ENCODE measurements at regions of chr16 and their contacts with region 1.

Region 1: DNA sequence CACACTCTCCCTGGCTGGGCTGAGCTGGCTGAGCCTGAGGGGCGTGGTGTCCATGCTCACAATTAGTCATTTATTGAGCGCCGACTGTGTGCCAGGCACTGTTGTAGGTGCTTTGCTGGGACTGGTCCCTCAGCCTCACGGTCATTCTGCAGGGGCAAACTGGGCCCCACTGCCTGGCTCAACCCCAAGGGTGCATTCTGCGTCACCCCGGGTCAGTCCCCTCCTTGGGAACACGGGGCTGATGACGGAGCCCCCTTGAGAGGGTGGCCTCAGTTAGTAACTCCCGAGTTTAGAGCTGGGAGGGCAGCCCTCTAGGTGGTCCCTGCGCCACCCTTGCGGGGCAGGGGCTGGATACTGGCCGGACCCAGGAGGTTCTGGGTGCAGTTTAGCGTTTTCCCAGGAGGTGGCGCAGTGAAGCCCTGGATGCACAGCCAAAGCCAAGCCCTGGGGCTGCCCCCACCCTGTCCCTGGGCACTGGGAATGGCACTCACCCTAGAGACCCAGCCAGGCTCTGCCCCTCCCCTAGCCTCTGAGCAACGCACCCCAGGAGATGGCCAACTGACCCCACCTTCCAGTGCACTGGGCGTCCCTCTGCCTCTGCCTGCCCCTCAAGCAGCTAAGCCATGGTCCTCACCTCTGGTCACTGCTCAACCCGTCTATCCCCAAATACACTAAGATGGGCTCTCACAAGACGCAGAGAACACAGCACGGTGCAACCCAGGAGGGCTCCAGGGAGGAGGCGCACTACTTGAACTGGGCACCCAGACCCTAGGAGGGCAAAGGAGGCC is 243.2 kb upstream of the GSE1 start:
- DNase-seq: peak in 1 of 3 donors; percentile 45
- H3K4me3 ChIP-seq: no peak overlapping the region
- H3K27ac ChIP-seq: no peak overlapping the region
- H3K4me1 ChIP-seq: peaks cover 0 to 55% (median 44%) of the 10 kb centered on the region in 4 experiments
- H3K27me3 ChIP-seq: no peaks in the 10 kb centered on the region

Region 2: DNA sequence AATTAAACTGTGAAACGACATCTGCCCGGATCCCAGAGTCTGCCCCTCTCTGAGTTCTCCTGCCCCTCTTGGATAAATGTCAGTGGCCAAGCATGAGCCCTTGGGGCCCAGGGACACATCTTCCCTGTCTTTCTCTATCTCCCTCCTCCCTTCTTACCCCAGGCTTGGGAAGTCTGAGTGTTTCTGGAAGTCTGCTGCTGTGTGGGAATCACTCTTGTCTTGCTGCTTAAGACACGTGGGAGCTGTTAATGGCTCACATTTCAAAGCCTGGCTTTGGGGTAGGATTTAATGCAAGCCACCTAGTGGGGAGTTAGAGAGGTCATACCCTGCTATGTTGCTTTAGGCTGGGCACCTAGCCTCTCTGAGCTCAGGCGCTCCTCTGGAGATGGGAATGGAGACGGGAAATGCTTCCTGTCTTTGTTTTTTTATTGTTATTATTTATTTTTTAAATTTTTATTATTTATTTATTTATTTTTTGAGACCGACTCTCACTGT is 39.2 kb before region 1 on chr16:
- CTCF ChIA-PET with region 1: interaction called, 11 read pairs
- POLR2A ChIA-PET with region 1: no interaction called
- DNase-seq: peak in 2 of 3 donors; percentile 76 to 78
- H3K4me3 ChIP-seq: no peak overlapping the region
- H3K27ac ChIP-seq: no peak overlapping the region
- H3K4me1 ChIP-seq: peaks cover 0 to 64% (median 59%) of the 10 kb centered on the region in 4 experiments
- H3K27me3 ChIP-seq: no peaks in the 10 kb centered on the region

Region 3: DNA sequence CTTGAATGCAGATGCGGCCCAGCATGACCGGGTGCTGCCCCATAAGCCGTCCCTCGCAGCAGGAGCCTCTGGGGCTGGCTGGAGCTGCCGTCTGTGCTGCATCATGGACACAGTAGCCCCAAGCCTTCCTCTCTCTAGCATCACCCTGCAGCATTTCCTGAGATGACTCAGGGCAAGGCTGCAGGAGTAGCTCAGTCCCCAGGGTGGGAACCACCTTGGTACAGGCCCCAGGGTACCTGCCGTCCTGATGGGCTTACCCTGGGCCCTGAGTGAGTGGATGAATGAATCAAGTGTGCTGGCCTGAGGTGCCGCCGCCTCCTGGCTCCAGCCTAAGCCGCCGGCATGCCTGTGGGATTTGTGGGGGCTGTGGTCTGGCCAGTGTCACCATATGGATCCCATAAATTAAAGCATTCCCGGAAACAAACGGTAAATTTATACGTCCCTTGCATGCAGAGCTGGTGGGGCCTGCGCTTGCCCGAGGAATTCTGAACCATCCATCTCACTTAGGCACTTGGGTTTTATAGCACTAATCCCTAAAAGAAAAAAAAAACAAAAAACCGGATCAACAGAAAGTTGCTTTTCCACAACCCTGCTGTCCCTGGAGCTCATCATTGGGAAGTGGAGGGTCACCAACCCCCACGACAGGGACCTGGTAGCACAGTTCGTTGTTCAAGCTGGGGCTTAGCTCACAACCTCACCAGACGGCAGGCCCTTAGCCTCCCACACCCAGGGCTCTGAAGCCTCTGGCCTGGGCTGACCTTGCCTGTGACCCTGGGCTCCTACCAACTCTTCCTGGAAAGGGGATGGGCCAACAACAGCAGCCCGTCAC is 15.0 kb before region 1 on chr16:
- CTCF ChIA-PET with region 1: interaction called, 13 read pairs
- POLR2A ChIA-PET with region 1: no interaction called
- DNase-seq: peak in 2 of 3 donors; percentile 78 to 82
- H3K4me3 ChIP-seq: no peak overlapping the region
- H3K27ac ChIP-seq: peak overlapping the region in 1 of 2 experiments; percentile 49
- H3K4me1 ChIP-seq: peaks cover 0 to 31% (median 10%) of the 10 kb centered on the region in 4 experiments
- H3K27me3 ChIP-seq: no peaks in the 10 kb centered on the region

Region 4: GRCh38 chr16:85384840-85385462 is 15.0 kb after region 1 on chr16:
- CTCF ChIA-PET with region 1: interaction called, 22 read pairs
- POLR2A ChIA-PET with region 1: interaction called, 4 read pairs
- DNase-seq: no peak
- H3K4me3 ChIP-seq: no peak overlapping the region
- H3K27ac ChIP-seq: no peak overlapping the region
- H3K4me1 ChIP-seq: peaks cover 4 to 62% (median 43%) of the 10 kb centered on the region in 4 experiments
- H3K27me3 ChIP-seq: no peaks in the 10 kb centered on the region

Region 5: GRCh38 chr16:85393674-85394483 is 23.9 kb after region 1 on chr16:
- CTCF ChIA-PET with region 1: interaction called, 10 read pairs
- POLR2A ChIA-PET with region 1: no interaction called
- DNase-seq: peak; percentile 61 to 78 (median 73)
- H3K4me3 ChIP-seq: no peak overlapping the region
- H3K27ac ChIP-seq: no peak overlapping the region
- H3K4me1 ChIP-seq: peaks cover 0 to 33% (median 28%) of the 10 kb centered on the region in 4 experiments
- H3K27me3 ChIP-seq: no peaks in the 10 kb centered on the region

Region 6: DNA sequence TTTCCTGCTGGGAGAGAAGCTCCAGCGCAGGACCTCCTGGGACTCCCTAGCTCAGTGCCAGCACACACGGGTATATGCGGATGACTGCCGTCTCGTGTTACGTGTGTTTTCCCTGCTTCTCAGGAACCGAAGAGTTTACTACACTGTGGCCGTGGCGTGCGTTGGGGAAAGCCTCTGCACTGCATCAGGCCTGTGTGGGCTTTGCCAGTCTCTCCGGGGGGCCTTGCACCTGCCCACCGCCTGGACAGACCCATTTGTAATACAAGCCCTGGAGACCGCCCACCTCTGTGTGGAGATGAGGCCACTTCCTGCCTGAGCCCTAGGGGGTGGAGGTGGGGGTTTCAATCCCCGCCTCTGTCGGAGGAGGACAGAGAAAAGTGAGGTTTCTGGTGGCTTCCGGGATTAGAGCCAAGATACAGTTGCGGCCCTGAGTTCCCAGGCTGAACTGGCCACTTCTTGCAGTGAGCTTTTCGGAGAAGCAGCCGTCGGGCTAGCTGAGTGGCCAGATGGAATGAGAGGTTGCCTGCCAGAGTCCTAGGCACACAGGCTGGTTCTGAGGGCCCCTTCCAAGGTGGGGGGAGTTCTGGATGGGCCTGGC is 199.8 kb after region 1 on chr16:
- CTCF ChIA-PET with region 1: no interaction called
- POLR2A ChIA-PET with region 1: no interaction called
- DNase-seq: peak in 2 of 3 donors; percentile 83 to 86
- H3K4me3 ChIP-seq: peak overlapping the region in 4 of 7 experiments; percentile 41 to 45 (median 44)
- H3K27ac ChIP-seq: peak overlapping the region; percentile 41 to 87
- H3K4me1 ChIP-seq: peaks cover 4 to 98% (median 95%) of the 10 kb centered on the region in 4 experiments
- H3K27me3 ChIP-seq: no peaks in the 10 kb centered on the region

Measured in common myeloid progenitor, CD34-positive (primary cell).